PC-9 (cell line): ENCODE measurements at regions of chr4 and their contacts with region 1.

Region 1: GRCh38 chr4:102500696-102501446 is at the start of gene NFKB1:
- DNase-seq: peak in 1 of 2 experiments; percentile 35
- H3K4me3 ChIP-seq: peak within 1 kb of the TSS; percentile 80
- H3K27ac ChIP-seq: peak within 1 kb of the TSS; percentile 82
- H3K4me1 ChIP-seq: peaks cover 34% of the 10 kb centered on the region
- H3K27me3 ChIP-seq: no peaks in the 10 kb centered on the region
- CTCF ChIP-seq: no peak
- total RNA-seq, gene NFKB1: 11.6 and 16.8 TPM in 2 replicates

Region 2: DNA sequence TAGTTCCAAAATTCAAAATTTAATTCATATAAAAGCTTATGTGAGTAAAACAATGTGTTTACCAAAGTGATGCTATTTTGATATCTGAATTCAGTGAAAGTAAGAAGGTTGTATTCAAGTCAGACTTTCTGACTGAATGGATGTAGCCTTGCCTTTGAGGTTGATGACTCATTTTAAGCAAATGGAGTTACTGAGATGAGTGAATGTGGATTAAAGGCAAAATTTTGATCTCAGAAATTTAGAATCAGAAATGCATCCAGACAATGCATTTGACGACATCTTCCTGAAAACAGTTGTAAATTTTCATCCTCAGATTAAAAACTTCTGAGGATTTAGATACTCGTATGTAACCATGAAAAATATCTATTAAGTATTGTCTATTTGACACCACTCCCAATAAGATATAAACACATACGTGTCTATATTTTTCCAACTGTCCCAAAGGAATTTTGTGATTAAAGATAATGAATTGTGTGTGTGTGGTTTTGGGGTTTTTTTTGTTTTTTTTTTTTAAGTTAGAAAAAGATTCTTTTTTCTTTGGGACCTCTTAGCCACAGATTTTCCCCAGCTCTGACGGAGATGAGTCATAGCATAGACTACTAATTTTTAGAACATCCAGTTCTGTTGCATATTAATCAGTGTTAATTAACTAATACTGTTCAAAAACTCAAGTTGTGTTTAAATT is 34.7 kb after region 1 on chr4:
- CTCF ChIA-PET with region 1: no interaction called
- POLR2A ChIA-PET with region 1: no interaction called
- intact Hi-C with region 1: no loop called
- DNase-seq: no peak
- H3K4me3 ChIP-seq: no peak overlapping the region
- H3K27ac ChIP-seq: no peak overlapping the region
- H3K4me1 ChIP-seq: no peaks in the 10 kb centered on the region
- H3K27me3 ChIP-seq: no peaks in the 10 kb centered on the region
- CTCF ChIP-seq: no peak

Region 3: DNA sequence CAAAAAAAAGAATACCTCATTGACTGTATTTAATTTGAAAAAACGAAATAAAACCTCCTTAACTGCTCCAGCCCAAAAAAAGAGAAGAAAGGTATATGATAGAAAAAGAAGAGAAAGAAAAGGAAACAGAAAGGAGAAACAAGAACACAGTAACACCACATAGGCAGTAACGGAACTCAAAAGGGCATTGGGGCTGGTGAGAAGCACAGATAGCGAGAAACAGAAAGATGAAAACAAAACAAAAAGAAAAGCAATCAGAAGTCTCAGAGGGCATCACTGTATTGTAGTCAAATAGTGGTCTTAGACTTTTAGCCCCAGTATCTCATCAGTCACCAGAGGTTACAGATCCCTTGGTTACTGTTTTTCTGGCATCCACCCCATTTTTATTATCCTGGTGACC is 88.9 kb after region 1 on chr4:
- CTCF ChIA-PET with region 1: no interaction called
- POLR2A ChIA-PET with region 1: no interaction called
- intact Hi-C with region 1: loop called (anchors 5 kb)
- DNase-seq: no peak
- H3K4me3 ChIP-seq: no peak overlapping the region
- H3K27ac ChIP-seq: no peak overlapping the region
- H3K4me1 ChIP-seq: 0 out of 2 replicates have a peak, but pooled peaks cover 8% of the 10 kb centered on the region
- H3K27me3 ChIP-seq: no peaks in the 10 kb centered on the region
- CTCF ChIP-seq: no peak

Region 4: GRCh38 chr4:102674881-102675540 is 174.1 kb after region 1 on chr4:
- CTCF ChIA-PET with region 1: no interaction called
- POLR2A ChIA-PET with region 1: no interaction called
- intact Hi-C with region 1: no loop called
- DNase-seq: no peak
- H3K4me3 ChIP-seq: no peak overlapping the region
- H3K27ac ChIP-seq: no peak overlapping the region
- H3K4me1 ChIP-seq: peaks cover 39% of the 10 kb centered on the region
- H3K27me3 ChIP-seq: no peaks in the 10 kb centered on the region
- CTCF ChIP-seq: no peak